MCF 10A (cell line): ENCODE measurements at regions of chr12 and their contacts with region 1.

Region 1: DNA sequence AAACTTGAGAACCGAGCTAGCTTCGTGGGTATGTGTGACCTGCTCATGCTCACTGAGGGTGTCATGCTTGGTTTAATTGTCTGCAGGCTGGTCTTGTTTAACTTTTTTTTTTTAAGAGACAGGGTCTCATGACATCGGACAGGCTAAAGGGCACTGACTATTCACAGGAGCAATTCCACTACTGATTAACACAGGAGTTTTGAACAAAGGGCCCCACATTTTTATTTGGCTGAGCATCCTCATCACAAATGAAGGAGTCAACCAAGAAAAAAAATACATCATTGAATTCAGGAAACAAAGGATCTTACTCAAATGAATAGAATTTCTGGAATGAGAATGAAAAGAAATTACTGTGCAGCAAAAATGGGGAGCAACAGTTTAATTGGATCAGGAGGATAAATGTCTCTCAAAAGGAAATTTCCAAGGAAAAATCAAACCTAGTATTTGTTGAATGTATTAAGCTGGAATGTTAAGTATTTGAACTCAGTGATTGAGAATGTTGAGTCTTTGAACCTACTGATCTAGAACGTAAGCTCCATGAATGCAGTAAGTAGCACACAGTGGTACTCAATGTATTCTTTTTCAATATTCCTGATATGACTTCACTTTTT is 20.8 kb upstream of the PYROXD1 start:
- DNase-seq: no peak
- H3K4me3 Mint-ChIP-seq: no peak overlapping the region
- H3K27ac Mint-ChIP-seq: no peak overlapping the region
- H3K4me1 Mint-ChIP-seq: no peaks in the 10 kb centered on the region
- H3K27me3 Mint-ChIP-seq: peaks cover 49% of the 10 kb centered on the region
- CTCF ChIP-seq: no peak

Region 2: DNA sequence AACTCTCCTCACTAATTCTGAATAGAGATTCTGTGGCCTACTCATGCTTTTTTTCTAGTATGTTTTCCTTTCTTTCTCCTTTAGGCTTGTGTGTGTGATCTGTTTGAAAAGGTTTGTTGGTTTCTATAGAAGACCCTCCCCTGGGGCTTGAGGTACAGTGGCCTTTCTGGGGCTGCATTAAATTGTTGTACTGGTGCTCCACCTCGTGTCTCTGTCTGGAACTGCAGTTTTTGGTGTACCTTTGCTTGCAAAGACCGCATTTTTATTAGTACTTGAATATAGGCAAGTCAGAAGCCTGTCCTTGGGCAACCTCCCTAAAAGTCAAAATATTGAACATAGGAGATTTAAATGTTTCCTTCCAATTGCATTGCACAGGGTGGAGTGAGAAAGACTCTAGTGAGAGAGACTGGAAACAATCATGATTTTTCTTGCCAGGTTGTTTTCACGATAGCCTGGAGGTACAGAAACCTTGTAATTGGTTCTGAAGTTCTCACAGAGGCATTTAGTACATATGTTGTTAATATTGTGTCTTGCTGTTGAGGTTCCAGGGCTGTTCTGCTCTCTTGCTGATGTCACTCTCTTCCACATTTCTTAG is 246.6 kb before region 1 on chr12:
- CTCF ChIA-PET with region 1: no interaction called
- POLR2A ChIA-PET with region 1: no interaction called
- intact Hi-C with region 1: no loop called
- DNase-seq: peak; percentile 60
- H3K4me3 Mint-ChIP-seq: no peak overlapping the region
- H3K27ac Mint-ChIP-seq: no peak overlapping the region
- H3K4me1 Mint-ChIP-seq: no peaks in the 10 kb centered on the region
- H3K27me3 Mint-ChIP-seq: peaks cover 83% of the 10 kb centered on the region
- CTCF ChIP-seq: peak; percentile 68

Region 3: DNA sequence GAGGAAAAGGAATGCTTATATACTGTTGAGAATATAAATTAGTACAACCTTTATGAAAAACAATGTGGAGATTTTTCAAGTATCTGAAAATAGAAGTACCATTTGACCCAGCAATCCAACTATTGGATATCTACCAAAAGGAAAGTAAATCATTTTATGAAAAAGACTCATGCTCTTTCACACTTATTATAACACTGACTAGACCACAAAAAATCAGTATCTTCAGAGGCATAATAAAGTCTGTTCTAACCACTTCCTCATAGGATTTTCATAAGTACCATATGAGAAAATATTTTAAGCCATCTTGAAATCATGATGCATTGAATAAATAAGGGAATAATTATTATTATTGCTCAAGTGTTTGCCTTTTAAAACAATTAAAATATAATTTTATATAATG is 194.8 kb before region 1 on chr12:
- CTCF ChIA-PET with region 1: no interaction called
- POLR2A ChIA-PET with region 1: no interaction called
- intact Hi-C with region 1: no loop called
- DNase-seq: no peak
- H3K4me3 Mint-ChIP-seq: no peak overlapping the region
- H3K27ac Mint-ChIP-seq: no peak overlapping the region
- H3K4me1 Mint-ChIP-seq: no peaks in the 10 kb centered on the region
- H3K27me3 Mint-ChIP-seq: peaks cover 25% of the 10 kb centered on the region
- CTCF ChIP-seq: no peak

Region 4: DNA sequence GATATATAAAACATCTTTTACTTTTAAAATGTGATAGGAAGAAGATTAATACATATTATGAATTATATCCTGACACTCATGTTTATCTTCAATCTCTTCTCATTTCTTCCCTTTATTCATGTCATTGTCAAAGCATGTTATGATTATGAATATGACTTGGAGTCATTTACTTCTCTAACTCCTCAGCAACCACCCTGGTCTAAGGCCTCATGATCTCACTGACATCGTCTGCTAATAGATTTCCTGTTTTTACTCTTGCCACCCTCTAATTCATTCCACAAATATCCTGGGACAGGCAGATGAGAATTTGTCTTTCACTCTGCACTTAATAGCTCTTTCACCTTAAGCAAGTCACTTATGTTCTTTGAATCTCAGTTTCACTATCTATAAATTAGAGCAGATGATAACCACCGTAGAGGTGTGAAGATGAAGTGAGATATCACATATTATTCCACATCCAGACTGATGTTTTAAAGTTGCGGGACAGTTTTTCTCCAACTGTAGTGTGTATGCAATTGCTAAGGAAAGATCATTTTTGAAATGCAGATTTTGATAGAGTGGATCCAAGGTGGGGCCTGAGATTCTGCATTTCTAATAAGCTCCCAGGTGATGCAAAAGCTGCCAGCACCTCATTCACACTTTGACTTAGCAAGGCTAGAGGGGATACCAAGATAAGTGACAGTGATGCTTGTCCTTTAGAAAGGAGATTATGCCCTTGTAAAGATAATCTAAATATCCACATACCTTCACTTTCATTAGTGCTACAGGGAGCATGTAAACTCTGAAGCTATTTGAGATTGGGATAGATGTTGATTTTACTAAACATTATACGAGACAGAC is 47.3 kb before region 1 on chr12:
- CTCF ChIA-PET with region 1: no interaction called
- POLR2A ChIA-PET with region 1: no interaction called
- intact Hi-C with region 1: loop called (anchors 10 kb)
- DNase-seq: no peak
- H3K4me3 Mint-ChIP-seq: no peak overlapping the region
- H3K27ac Mint-ChIP-seq: no peak overlapping the region
- H3K4me1 Mint-ChIP-seq: no peaks in the 10 kb centered on the region
- H3K27me3 Mint-ChIP-seq: peaks cover 68% of the 10 kb centered on the region
- CTCF ChIP-seq: no peak